Naive thymus-derived CD4-positive, alpha-beta T cell (primary cell): ENCODE measurements at regions of chr19 and their contacts with region 1.

Region 1: DNA sequence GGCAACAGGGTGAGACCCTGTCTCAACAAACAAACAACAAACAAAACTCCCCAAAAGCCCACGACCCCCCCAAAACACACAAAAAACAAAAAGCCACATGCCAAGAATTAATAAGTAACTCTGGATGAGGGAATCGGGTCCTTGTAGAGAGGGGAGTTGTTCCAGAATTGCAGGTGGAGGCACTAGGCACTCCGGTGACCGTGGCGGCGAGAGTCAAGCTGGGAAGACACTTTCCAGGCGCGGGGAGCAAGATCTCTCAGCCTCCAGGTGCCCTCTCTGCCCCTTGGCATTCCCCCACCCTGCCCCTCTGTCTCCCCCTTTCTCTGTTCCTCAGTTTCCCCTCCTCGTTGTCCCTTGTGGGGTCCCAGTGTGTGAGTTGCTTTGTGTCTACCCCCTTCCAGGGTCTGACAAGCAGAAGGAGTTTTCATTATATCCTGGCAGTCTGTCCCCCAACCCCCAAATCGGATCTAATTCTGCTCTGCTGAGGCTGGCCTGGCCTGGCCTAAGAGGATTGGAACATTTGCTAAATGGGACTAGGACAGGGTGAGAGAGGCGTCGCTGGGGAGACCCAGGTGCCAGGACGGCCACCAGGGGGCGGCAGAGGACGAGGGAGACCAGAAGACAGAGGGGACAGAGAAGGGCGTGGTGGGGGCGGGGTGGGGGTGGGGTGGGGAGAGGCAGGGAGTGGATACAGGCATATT is 8.3 kb upstream of the CRX start:
- DNase-seq: peak; percentile 20 to 82 (median 59)
- ATAC-seq: peak; percentile 78
- H3K4me3 ChIP-seq: no peak overlapping the region
- H3K4me3 Mint-ChIP-seq: no peak overlapping the region
- H3K27ac ChIP-seq: no peak overlapping the region
- H3K27ac Mint-ChIP-seq: no peak overlapping the region
- H3K4me1 ChIP-seq: no peaks in the 10 kb centered on the region
- H3K4me1 Mint-ChIP-seq: peaks cover 0 to 4% (median 0%) of the 10 kb centered on the region in 7 donors
- H3K27me3 ChIP-seq: no peaks in the 10 kb centered on the region
- H3K27me3 Mint-ChIP-seq: peaks cover 0 to 18% (median 4%) of the 10 kb centered on the region in 5 donors

Region 2: GRCh38 chr19:47618771-47619170 is 194.7 kb before region 1 on chr19:
- CTCF ChIA-PET with region 1: no interaction called
- POLR2A ChIA-PET with region 1: no interaction called
- intact Hi-C with region 1: no loop called
- DNase-seq: no peak
- ATAC-seq: no peak
- H3K4me3 ChIP-seq: no peak overlapping the region
- H3K4me3 Mint-ChIP-seq: no peak overlapping the region
- H3K27ac ChIP-seq: no peak overlapping the region
- H3K27ac Mint-ChIP-seq: no peak overlapping the region
- H3K4me1 ChIP-seq: no peaks in the 10 kb centered on the region
- H3K4me1 Mint-ChIP-seq: peaks cover 15 to 64% (median 45%) of the 10 kb centered on the region in 7 donors
- H3K27me3 ChIP-seq: no peaks in the 10 kb centered on the region
- H3K27me3 Mint-ChIP-seq: no peaks in the 10 kb centered on the region

Region 3: GRCh38 chr19:47863514-47863936 is 50.1 kb after region 1 on chr19:
- CTCF ChIA-PET with region 1: no interaction called
- POLR2A ChIA-PET with region 1: no interaction called
- intact Hi-C with region 1: loop called (anchors 1 kb)
- DNase-seq: peak; percentile 50 to 87 (median 78)
- ATAC-seq: peak; percentile 91
- H3K4me3 ChIP-seq: no peak overlapping the region
- H3K4me3 Mint-ChIP-seq: no peak overlapping the region
- H3K27ac ChIP-seq: no peak overlapping the region
- H3K27ac Mint-ChIP-seq: peak overlapping the region in 1 of 9 donors; percentile 54
- H3K4me1 ChIP-seq: no peaks in the 10 kb centered on the region
- H3K4me1 Mint-ChIP-seq: no peaks in the 10 kb centered on the region
- H3K27me3 ChIP-seq: no peaks in the 10 kb centered on the region
- H3K27me3 Mint-ChIP-seq: peaks cover 7 to 28% (median 13%) of the 10 kb centered on the region in 5 donors

Region 4: DNA sequence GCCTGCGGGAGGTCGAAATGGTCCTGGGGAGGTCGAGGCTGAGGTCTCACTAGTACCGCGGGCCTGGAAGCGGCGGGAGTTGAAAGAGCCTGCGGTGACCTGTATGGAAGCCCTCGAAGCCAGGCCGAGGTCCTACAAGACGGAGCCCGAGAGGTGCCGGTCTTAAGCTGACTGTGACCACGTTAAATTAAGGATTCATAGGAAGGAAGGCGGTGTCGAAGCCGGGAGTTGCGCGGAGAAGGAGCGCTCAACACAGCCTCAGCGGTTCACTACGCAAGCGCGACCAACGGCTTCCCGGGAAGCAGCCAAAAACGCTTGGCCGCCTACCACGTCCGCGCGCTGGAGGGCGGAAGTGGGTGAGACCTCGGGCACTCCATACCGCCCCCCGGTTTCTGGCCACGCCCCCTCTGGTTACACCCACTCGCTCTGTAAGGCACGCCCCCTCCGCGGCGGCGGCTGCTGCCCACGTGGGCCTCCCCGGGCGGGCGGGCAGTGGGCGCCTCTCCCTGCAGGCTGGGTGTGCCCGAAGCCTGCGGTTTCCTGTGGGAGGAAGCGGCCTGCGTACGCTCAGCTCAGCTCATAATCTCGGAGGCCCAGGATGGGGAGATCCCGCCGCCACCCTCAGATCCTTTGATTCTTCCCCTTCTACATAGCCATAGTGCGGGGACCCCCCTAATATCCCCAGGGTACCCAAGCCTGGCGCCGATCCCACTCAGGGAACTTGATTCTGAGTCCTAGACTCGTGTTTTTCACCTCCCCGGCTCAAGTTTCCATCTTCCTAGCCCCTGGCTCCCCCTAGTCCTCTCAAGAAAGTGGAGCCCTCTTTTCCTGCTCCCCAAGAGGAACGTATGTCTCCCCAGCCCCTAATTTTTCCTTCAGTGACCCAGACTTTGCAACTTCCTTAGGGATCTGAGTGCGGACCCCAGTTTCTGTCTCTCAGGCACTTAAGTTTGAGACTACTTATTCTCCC is 508.5 kb after region 1 on chr19:
- CTCF ChIA-PET with region 1: no interaction called
- POLR2A ChIA-PET with region 1: no interaction called
- intact Hi-C with region 1: no loop called
- DNase-seq: peak; percentile 99 to 100 (median 100)
- ATAC-seq: peak; percentile 87
- H3K4me3 ChIP-seq: peak overlapping the region; percentile 79
- H3K4me3 Mint-ChIP-seq: peak overlapping the region; percentile 90 to 99 (median 96)
- H3K27ac ChIP-seq: peak overlapping the region; percentile 100
- H3K27ac Mint-ChIP-seq: peak overlapping the region; percentile 96 to 100 (median 99)
- H3K4me1 ChIP-seq: peaks cover 45 to 47% of the 10 kb centered on the region in 2 donors
- H3K4me1 Mint-ChIP-seq: peaks cover 36 to 63% (median 51%) of the 10 kb centered on the region in 7 donors
- H3K27me3 ChIP-seq: no peaks in the 10 kb centered on the region
- H3K27me3 Mint-ChIP-seq: peaks cover 0 to 2% (median 0%) of the 10 kb centered on the region in 5 donors